Posterior vena cava (tissue), 2 donors: ENCODE measurements at regions of chr2 and their contacts with region 1.

Region 1: DNA sequence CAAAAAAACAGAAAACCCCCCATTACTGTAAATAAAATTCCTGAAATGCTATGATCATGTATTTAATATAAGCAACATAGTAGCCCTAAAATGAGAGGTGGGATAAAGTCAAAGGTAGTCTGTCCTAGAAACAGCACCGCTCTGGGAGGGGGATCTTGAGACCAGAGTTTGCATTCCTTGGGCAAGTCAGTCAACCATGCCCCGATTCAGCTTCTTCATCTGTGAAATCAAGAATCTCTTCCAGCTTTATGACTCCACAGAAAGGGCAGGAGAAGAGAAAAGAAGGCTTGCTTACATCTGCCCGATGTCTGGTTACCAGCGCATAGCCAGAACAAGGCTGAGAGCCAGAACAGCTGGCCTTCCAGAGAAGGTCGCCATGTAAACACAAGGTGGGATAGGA is 2.1 kb upstream of the FBLN7 start:
- DNase-seq: no peak

Region 2: GRCh38 chr2:112181571-112182290 is 45.6 kb after region 1 on chr2:
- intact Hi-C with region 1: loop called in 1 of 2 experiments (anchors 1 kb)
- DNase-seq: no peak